Left cardiac atrium (tissue), 4 donors: ENCODE measurements at regions of chr19 and their contacts with region 1.

Region 1: DNA sequence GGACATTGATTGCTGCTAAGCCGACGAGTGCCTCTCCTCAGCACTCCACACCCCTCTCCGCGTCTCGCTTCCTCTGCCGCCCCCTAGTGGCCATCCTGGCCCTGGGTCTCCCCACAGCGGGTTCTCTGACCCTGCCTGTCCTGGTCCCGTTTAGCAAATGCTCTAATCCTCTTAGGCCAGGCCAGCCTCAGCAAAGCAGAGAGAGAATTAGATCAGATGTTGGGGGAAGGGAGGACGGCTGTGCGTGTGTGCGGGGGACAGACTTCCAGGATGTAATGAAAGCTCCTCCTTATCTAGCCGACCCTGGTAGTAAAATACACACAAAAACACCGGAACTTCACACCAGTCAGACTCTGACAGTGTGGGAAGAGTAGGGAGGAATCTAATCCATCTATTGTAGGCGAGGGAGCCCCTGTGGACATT is 4.5 kb downstream of the TPRX2 start:
- DNase-seq: peak; percentile 87
- ATAC-seq: peak; percentile 94 to 96

Region 2: GRCh38 chr19:47813304-47814004 is 50.1 kb before region 1 on chr19:
- intact Hi-C with region 1: loop called in 1 of 2 experiments (anchors 5 kb)
- DNase-seq: peak; percentile 77
- ATAC-seq: peak; percentile 41 to 67